A549 (cell line): ENCODE measurements at regions of chr1 and their contacts with region 1.

Region 1: DNA sequence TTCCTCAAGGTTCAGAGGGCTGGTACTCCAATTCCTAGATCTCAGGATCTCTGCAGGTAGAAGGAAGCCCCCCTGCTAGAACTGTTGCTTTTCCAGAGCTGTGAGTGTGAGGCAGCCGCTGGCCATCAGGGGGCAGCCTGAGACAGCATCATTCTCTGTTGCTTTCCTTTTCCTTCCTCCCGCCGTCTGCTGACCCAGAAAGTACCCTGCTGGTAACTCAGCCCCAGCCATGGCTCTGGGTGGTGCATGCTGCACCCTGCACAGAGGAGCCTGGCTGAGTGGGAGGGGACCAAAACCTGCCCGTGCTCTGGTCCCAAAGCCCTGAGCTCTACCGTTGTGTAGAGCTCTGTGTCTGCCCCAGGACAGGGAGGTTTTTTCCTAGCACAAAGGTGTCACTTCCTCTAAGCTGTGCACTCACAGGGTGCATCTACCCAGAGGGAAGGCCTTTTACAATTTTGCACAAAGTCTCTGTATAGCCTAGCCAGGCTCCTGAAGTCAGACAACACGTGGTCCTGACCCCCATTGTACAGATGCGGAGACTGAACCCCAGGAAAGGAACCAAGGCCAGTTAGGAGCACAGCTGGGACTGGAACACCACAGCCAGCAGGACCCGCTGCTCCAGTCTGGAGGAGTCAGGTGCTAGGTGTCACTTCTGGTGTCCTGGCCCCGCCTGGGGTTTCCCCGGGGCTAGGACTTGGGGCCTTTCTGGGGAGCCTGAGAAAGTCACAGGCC is 5.6 kb upstream of the FAM131C start:
- DNase-seq: peak; percentile 52 to 76
- ATAC-seq: peak; percentile 58 to 78
- H3K4me3 ChIP-seq: no peak overlapping the region
- H3K27ac ChIP-seq: peak overlapping the region; percentile 74 to 86
- H3K4me1 ChIP-seq: peaks cover 72% of the 10 kb centered on the region
- CTCF ChIP-seq: peak; percentile 76
- EP300 ChIP-seq: no peak
- POLR2A ChIP-seq: no peak
- RAD21 ChIP-seq: peak; percentile 91

Region 2: GRCh38 chr1:15668089-15668754 is 410.9 kb before region 1 on chr1:
- CTCF ChIA-PET with region 1: no interaction called
- POLR2A ChIA-PET with region 1: no interaction called
- DNase-seq: no peak
- ATAC-seq: no peak
- H3K4me3 ChIP-seq: no peak overlapping the region
- H3K27ac ChIP-seq: no peak overlapping the region
- H3K4me1 ChIP-seq: no peaks in the 10 kb centered on the region
- CTCF ChIP-seq: no peak
- EP300 ChIP-seq: no peak
- POLR2A ChIP-seq: no peak
- RAD21 ChIP-seq: no peak

Region 3: DNA sequence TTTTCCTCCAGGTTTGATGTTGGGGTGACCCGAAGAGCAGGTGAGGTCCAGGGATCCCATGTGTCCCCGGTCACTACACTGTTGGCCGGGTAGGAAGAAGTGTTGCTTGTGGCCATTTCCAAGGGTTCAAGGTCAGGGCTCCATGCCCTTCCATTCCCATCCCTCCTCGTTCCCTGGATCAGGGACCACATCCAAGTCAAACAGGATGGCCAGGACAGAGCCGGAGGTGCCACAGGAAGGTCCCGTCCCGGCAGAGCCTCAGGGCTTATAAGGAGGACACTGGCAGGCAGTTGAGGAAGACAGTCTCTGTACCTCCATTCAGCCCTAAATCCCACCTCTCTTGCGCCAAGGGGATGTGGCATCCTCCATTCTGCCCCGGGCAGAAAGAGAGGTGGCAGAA is 16.4 kb after region 1 on chr1:
- CTCF ChIA-PET with region 1: interaction called, 23 read pairs
- POLR2A ChIA-PET with region 1: no interaction called
- DNase-seq: no peak
- ATAC-seq: no peak
- H3K4me3 ChIP-seq: no peak overlapping the region
- H3K27ac ChIP-seq: no peak overlapping the region
- H3K4me1 ChIP-seq: 0 out of 3 replicates have a peak, but pooled peaks cover 5% of the 10 kb centered on the region
- CTCF ChIP-seq: no peak
- EP300 ChIP-seq: no peak
- POLR2A ChIP-seq: no peak
- RAD21 ChIP-seq: no peak

Region 4: DNA sequence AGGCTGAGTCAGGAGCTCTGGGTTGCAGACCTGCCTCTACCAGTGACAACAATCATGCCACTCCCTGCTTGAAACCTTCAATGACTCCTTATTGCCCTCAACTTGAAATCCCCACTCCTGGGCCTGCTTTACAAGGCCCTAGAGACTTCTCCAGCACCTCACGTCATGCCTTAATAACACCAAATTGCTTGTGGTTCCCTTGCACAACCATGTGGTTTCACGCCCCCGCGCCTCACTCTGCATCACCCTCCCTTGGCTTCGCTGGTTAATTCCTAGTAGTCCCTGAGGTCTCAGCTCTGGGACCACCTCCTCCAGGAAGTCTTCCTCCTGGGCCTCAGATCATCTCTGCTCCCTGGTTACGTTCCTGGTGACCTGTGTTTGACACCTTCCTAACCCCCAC is 43.8 kb after region 1 on chr1:
- CTCF ChIA-PET with region 1: interaction called, 55 read pairs
- POLR2A ChIA-PET with region 1: no interaction called
- DNase-seq: no peak
- ATAC-seq: no peak
- H3K4me3 ChIP-seq: no peak overlapping the region
- H3K27ac ChIP-seq: peak overlapping the region in 1 of 2 experiments; percentile 57; a peak in 3 of 6 replicates
- H3K4me1 ChIP-seq: peaks cover 57% of the 10 kb centered on the region
- CTCF ChIP-seq: no peak
- EP300 ChIP-seq: no peak
- POLR2A ChIP-seq: no peak
- RAD21 ChIP-seq: no peak

Region 5: DNA sequence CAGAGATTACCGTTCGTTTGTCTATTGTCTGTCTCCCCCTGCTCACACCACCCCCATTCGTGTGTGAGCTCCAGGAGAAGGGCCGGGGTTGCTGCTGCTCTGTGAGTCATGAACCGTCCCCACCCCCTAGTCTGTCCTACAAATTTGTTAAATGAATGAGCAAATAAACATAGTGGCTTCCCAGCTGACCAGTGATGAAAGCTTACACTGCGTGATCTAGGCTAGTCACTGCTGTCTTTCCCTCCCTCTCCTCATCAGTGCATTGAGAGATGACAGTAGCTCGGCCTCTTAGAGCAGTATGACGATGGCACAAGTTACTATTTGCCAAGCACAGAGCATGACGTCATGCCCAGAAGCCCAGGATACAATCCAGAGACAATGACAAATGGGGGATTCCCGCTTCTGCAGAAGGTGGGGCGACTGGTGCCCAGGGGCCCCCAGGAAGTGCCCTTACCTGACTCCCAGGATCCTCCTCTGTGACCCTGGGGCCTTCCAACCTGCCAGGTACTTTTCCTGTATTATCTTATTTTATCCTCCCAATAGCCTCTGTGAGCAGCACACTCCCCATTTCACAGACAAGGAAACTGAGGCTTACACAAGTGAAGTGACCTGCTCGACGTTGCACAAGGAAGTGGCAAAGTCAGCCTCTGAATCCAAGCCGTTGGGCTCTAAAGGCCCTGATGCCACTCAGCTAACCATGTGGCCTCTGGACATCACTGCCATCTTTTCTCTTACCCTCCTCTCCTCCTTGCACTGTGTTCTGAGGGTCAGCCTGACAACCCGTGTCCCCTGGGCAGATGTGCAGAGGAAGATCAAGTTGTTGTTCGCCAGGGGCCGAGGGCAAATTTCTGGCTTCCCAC is 85.4 kb after region 1 on chr1:
- CTCF ChIA-PET with region 1: interaction called, 13 read pairs
- POLR2A ChIA-PET with region 1: no interaction called
- DNase-seq: peak; percentile 80 to 95
- ATAC-seq: peak; percentile 79 to 86
- H3K4me3 ChIP-seq: no peak overlapping the region
- H3K27ac ChIP-seq: peak overlapping the region; percentile 81 to 97
- H3K4me1 ChIP-seq: peaks cover 73% of the 10 kb centered on the region
- CTCF ChIP-seq: no peak
- EP300 ChIP-seq: peak; percentile 34 to 64; a peak in 2 of 5 replicates
- POLR2A ChIP-seq: no peak
- RAD21 ChIP-seq: peak in 1 of 2 experiments; percentile 15; a peak in 2 of 5 replicates

Region 6: GRCh38 chr1:16198444-16199156 is 119.5 kb after region 1 on chr1:
- CTCF ChIA-PET with region 1: interaction called, 14 read pairs
- POLR2A ChIA-PET with region 1: no interaction called
- DNase-seq: no peak
- ATAC-seq: no peak; a peak in 1 of 6 replicates
- H3K4me3 ChIP-seq: no peak overlapping the region
- H3K27ac ChIP-seq: no peak overlapping the region
- H3K4me1 ChIP-seq: no peaks in the 10 kb centered on the region
- CTCF ChIP-seq: no peak
- EP300 ChIP-seq: no peak
- POLR2A ChIP-seq: no peak
- RAD21 ChIP-seq: no peak

Region 7: GRCh38 chr1:16243936-16244649 is 165.0 kb after region 1 on chr1:
- CTCF ChIA-PET with region 1: interaction called, 107 read pairs
- POLR2A ChIA-PET with region 1: no interaction called
- DNase-seq: peak; percentile 73 to 79
- ATAC-seq: peak; percentile 84 to 87
- H3K4me3 ChIP-seq: no peak overlapping the region
- H3K27ac ChIP-seq: peak overlapping the region in 1 of 2 experiments; percentile 27; a peak in 3 of 6 replicates
- H3K4me1 ChIP-seq: peaks cover 16% of the 10 kb centered on the region; the same call in 2 of the 3 replicates
- CTCF ChIP-seq: peak; percentile 76
- EP300 ChIP-seq: no peak
- POLR2A ChIP-seq: no peak
- RAD21 ChIP-seq: peak; percentile 83 to 90